GM12878 (cell line): ENCODE measurements at regions of chr5 and their contacts with region 1.

Region 1: GRCh38 chr5:139181835-139182452 is 16.2 kb downstream of the SIL1 start:
- DNase-seq: no peak
- ATAC-seq: no peak
- H3K4me3 ChIP-seq: no peak overlapping the region
- H3K27ac ChIP-seq: peak overlapping the region; percentile 65
- H3K4me1 ChIP-seq: peaks cover 55% of the 10 kb centered on the region
- H3K27me3 ChIP-seq: no peaks in the 10 kb centered on the region
- CTCF ChIP-seq: no peak
- EP300 ChIP-seq: no peak
- POLR2A ChIP-seq: no peak
- RAD21 ChIP-seq: no peak

Region 2: DNA sequence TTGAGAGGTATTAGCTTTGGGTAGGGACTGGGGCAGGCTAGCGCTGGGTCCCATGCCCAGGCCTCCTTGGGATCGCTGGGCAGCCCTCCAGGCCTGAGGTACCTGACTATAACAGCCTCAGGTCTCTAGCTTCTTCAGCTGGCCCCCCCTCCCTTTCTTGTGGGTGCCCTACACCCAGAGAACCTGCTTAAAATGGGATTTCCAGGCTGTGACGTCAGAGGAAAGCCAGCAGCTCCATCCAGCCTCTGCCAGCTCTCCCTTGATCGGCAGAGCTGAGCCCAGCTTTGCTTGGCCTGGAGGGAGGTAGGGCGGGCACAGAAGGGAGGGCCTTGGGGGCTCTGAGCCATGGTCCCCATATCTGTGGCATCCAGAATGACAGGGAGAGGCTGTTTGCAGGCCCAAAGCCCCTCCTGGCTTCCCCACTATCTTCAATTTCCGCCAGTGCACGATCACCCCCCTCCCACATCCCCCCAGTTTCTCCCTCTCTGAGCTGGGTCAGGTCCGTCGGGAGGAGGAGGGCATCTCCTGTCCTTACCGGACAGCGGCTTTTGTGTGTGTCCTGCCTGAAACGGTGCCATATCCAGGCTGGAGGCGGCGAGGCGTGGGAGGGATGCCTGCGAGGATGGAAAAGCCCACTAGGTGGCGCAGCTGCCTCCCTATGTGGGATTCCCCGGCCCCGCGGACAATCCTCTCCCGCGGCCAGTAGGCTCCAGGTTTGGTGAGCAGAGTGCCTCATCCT is 732.3 kb before region 1 on chr5:
- CTCF ChIA-PET with region 1: no interaction called
- POLR2A ChIA-PET with region 1: no interaction called
- RAD21 ChIA-PET with region 1: no interaction called
- SMC1A ChIA-PET with region 1: no interaction called
- in situ Hi-C with region 1: no loop called
- intact Hi-C with region 1: no loop called
- DNase-seq: no peak
- ATAC-seq: peak; percentile 97
- H3K4me3 ChIP-seq: no peak overlapping the region
- H3K27ac ChIP-seq: no peak overlapping the region
- H3K4me1 ChIP-seq: peaks cover 4% of the 10 kb centered on the region; the same call in 1 of the 2 replicates
- H3K27me3 ChIP-seq: no peaks in the 10 kb centered on the region
- CTCF ChIP-seq: peak; percentile 91 to 96 (median 93)
- EP300 ChIP-seq: no peak
- POLR2A ChIP-seq: no peak
- RAD21 ChIP-seq: peak; percentile 63

Region 3: DNA sequence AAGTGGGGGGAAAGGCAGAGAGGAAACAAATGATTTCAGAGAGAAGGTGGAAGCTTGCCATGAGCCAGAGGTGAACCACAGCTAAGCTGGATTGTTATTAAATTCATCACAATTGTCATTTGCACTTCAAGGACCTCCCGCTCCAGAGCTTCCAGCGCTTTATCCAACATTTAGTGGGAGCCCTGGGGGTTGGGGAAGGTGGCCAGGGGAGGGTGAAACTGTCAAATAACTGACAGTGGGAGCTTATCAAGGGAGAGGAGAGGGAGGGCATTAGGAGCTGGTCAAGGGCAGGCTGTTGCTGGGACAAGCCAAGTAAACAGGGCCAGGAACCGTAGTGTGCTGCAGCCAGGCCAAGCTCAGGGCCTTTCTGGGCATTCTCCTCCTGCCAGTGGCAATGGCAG is 55.2 kb before region 1 on chr5:
- CTCF ChIA-PET with region 1: no interaction called
- POLR2A ChIA-PET with region 1: no interaction called
- RAD21 ChIA-PET with region 1: no interaction called
- SMC1A ChIA-PET with region 1: no interaction called
- in situ Hi-C with region 1: no loop called
- intact Hi-C with region 1: no loop called
- DNase-seq: no peak
- ATAC-seq: no peak
- H3K4me3 ChIP-seq: no peak overlapping the region
- H3K27ac ChIP-seq: no peak overlapping the region
- H3K4me1 ChIP-seq: no peaks in the 10 kb centered on the region
- H3K27me3 ChIP-seq: no peaks in the 10 kb centered on the region
- CTCF ChIP-seq: no peak
- EP300 ChIP-seq: no peak
- POLR2A ChIP-seq: no peak
- RAD21 ChIP-seq: no peak

Region 4: GRCh38 chr5:139197710-139198669 is 16.0 kb after region 1 on chr5 and contains the start of gene SIL1:
- CTCF ChIA-PET with region 1: interaction called, 4 read pairs
- POLR2A ChIA-PET with region 1: interaction called, 6 read pairs
- RAD21 ChIA-PET with region 1: interaction called, 10 read pairs
- SMC1A ChIA-PET with region 1: interaction called, 8 read pairs
- in situ Hi-C with region 1: no loop called
- intact Hi-C with region 1: no loop called
- DNase-seq: peak; percentile 63
- ATAC-seq: peak; percentile 99
- H3K4me3 ChIP-seq: peak within 1 kb of the TSS; percentile 86
- H3K27ac ChIP-seq: peak within 1 kb of the TSS; percentile 97
- H3K4me1 ChIP-seq: peaks cover 4% of the 10 kb centered on the region
- H3K27me3 ChIP-seq: no peaks in the 10 kb centered on the region
- CTCF ChIP-seq: no peak
- EP300 ChIP-seq: no peak
- POLR2A ChIP-seq: peak; percentile 98
- RAD21 ChIP-seq: no peak
- polyA plus RNA-seq, gene SIL1: 4.1 to 8.2 TPM

Region 5: GRCh38 chr5:139458580-139459406 is 276.8 kb after region 1 on chr5:
- CTCF ChIA-PET with region 1: no interaction called
- POLR2A ChIA-PET with region 1: no interaction called
- RAD21 ChIA-PET with region 1: no interaction called
- SMC1A ChIA-PET with region 1: no interaction called
- in situ Hi-C with region 1: no loop called
- intact Hi-C with region 1: no loop called
- DNase-seq: peak; percentile 60
- ATAC-seq: peak; percentile 70
- H3K4me3 ChIP-seq: no peak overlapping the region
- H3K27ac ChIP-seq: peak overlapping the region; percentile 93
- H3K4me1 ChIP-seq: peaks cover 45% of the 10 kb centered on the region
- H3K27me3 ChIP-seq: no peaks in the 10 kb centered on the region
- CTCF ChIP-seq: no peak
- EP300 ChIP-seq: no peak
- POLR2A ChIP-seq: no peak
- RAD21 ChIP-seq: no peak